ENCODE measurements at regions of chr4 and their contacts with region 1.

Region 1: GRCh38 chr4:102826890-102827673 is at the start of gene UBE2D3:
- DNase-seq: peak; percentile 97
- ATAC-seq: peak; percentile 60
- H3K4me3 Mint-ChIP-seq: no peak within 1 kb of the TSS
- H3K27ac Mint-ChIP-seq: no peak within 1 kb of the TSS
- H3K4me1 Mint-ChIP-seq: peaks cover 21% of the 10 kb centered on the region
- H3K27me3 Mint-ChIP-seq: no peaks in the 10 kb centered on the region
- CTCF ChIP-seq: no peak
- total RNA-seq, gene UBE2D3: 410 to 427 TPM

Region 2: GRCh38 chr4:102620697-102621497 is 206.2 kb before region 1 on chr4:
- CTCF ChIA-PET with region 1: no interaction called
- POLR2A ChIA-PET with region 1: interaction called, 3 read pairs
- intact Hi-C with region 1: loop called (anchors 10 kb)
- DNase-seq: peak; percentile 31
- ATAC-seq: peak; percentile 23
- H3K4me3 Mint-ChIP-seq: no peak overlapping the region
- H3K27ac Mint-ChIP-seq: no peak overlapping the region
- H3K4me1 Mint-ChIP-seq: peaks cover 46% of the 10 kb centered on the region
- H3K27me3 Mint-ChIP-seq: no peaks in the 10 kb centered on the region
- CTCF ChIP-seq: no peak

Region 3: DNA sequence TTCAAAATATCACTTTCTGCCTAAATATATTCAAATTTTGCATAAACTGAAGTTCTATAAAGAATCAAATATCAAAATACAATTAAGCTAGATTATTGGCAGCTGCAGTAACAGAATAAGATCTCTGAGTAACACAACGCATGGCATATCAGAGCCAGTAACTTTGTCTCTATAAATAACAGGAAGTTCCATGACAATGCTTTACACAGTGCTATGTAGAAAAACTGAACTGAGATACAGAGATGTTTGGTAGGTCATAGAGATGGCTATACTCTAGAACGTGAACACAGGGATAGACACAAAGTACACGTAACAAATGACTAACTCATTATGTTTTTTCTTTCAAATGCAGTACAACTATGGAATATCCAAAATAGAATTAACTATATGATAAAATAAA is 17.9 kb before region 1 on chr4:
- CTCF ChIA-PET with region 1: interaction called, 7 read pairs
- POLR2A ChIA-PET with region 1: interaction called, 24 read pairs
- intact Hi-C with region 1: no loop called
- DNase-seq: no peak
- ATAC-seq: peak; percentile 76
- H3K4me3 Mint-ChIP-seq: no peak overlapping the region
- H3K27ac Mint-ChIP-seq: peak overlapping the region; percentile 62
- H3K4me1 Mint-ChIP-seq: peaks cover 77% of the 10 kb centered on the region
- H3K27me3 Mint-ChIP-seq: no peaks in the 10 kb centered on the region
- CTCF ChIP-seq: no peak

Region 4: DNA sequence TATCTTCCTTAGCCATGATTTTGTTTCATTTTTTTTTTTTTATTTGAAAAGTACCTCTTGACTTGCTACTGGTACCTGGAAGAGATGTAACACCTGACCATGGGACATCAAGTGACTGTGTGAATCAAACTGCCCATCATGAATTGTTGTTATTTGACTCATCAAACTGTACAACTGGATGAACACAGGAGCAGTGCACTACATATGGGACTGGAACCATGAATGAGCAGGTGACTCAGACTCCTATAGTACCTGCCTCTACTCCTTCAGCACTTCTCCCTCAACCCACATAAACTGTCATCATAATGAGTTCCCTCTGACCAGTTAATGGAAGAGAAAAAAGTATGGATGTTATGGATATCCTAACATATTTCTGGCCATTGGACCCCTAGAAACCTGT is 16.2 kb after region 1 on chr4:
- CTCF ChIA-PET with region 1: interaction called, 4 read pairs
- POLR2A ChIA-PET with region 1: interaction called, 13 read pairs
- intact Hi-C with region 1: no loop called
- DNase-seq: no peak
- ATAC-seq: no peak
- H3K4me3 Mint-ChIP-seq: no peak overlapping the region
- H3K27ac Mint-ChIP-seq: no peak overlapping the region
- H3K4me1 Mint-ChIP-seq: peaks cover 10% of the 10 kb centered on the region
- H3K27me3 Mint-ChIP-seq: no peaks in the 10 kb centered on the region
- CTCF ChIP-seq: no peak

Region 5: DNA sequence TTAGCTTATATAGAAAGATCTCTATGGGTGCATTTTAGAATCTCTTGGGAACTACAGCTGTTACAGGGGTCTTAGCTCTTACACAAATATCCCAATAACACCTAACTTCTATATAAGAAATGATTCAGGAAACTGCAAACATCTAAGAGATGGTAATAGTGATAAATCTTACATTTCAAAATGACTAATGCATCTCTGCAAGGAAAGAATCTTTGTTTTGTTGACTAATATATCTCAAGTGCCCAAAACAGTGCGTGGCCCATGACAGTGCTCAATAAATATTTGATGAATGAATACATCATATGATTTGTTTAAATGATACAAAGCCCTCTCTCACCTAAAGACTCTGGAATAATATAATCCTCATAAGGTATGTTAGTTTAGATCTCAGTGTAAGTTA is 323.6 kb after region 1 on chr4:
- CTCF ChIA-PET with region 1: no interaction called
- POLR2A ChIA-PET with region 1: no interaction called
- intact Hi-C with region 1: no loop called
- DNase-seq: no peak
- ATAC-seq: no peak
- H3K4me3 Mint-ChIP-seq: no peak overlapping the region
- H3K27ac Mint-ChIP-seq: no peak overlapping the region
- H3K4me1 Mint-ChIP-seq: no peaks in the 10 kb centered on the region
- H3K27me3 Mint-ChIP-seq: no peaks in the 10 kb centered on the region
- CTCF ChIP-seq: no peak

Measured in activated CD8-positive, alpha-beta T cell treated with anti-CD3 and anti-CD28 coated beads for 36 hours (primary cell).